ENCODE measurements at regions of chr2 and their contacts with region 1.

Region 1: DNA sequence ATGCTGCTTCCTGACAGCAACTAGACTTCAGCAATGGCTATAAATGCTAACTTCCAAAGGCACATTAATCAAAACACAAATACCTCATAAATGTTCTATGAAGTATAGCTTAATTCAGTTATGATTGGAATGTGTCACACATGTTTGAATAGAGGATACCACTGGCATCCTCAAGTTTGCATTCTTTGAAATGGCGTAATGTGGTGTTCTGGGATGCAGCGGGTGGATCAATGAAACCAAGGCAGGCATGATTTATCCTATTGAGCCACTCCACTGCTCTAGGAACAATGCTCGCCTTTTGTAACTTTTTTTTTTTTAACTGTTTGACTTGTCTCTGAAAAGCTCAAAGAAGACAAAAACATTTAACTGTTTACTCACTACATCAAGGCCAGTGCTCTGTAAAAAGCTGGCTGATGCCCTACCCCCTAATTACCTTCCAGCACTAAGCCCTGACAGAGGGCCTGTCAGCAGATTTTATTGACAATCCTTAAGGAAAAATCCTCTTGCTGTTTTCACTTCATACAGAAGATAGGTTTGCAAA is 278.8 kb upstream of the SESTD1 start:
- DNase-seq: peak; percentile 51 to 77
- H3K4me3 ChIP-seq: no peak overlapping the region
- H3K4me3 Mint-ChIP-seq: no peak overlapping the region
- H3K27ac Mint-ChIP-seq: no peak overlapping the region
- H3K4me1 ChIP-seq: no peaks in the 10 kb centered on the region
- H3K4me1 Mint-ChIP-seq: no peaks in the 10 kb centered on the region
- H3K27me3 ChIP-seq: no peaks in the 10 kb centered on the region
- H3K27me3 Mint-ChIP-seq: no peaks in the 10 kb centered on the region
- CTCF ChIP-seq: no peak

Region 2: GRCh38 chr2:179460181-179460929 is 83.1 kb before region 1 on chr2:
- CTCF ChIA-PET with region 1: no interaction called
- POLR2A ChIA-PET with region 1: no interaction called
- intact Hi-C with region 1: loop called (anchors 5 kb)
- DNase-seq: peak; percentile 46 to 57
- H3K4me3 ChIP-seq: no peak overlapping the region
- H3K4me3 Mint-ChIP-seq: no peak overlapping the region
- H3K27ac Mint-ChIP-seq: peak overlapping the region; percentile 87
- H3K4me1 ChIP-seq: peaks cover 27% of the 10 kb centered on the region
- H3K4me1 Mint-ChIP-seq: peaks cover 11% of the 10 kb centered on the region
- H3K27me3 ChIP-seq: no peaks in the 10 kb centered on the region
- H3K27me3 Mint-ChIP-seq: no peaks in the 10 kb centered on the region
- CTCF ChIP-seq: no peak

Region 3: GRCh38 chr2:179574061-179574546 is 30.7 kb after region 1 on chr2:
- CTCF ChIA-PET with region 1: no interaction called
- POLR2A ChIA-PET with region 1: no interaction called
- intact Hi-C with region 1: loop called (anchors 2 kb)
- DNase-seq: no peak
- H3K4me3 ChIP-seq: no peak overlapping the region
- H3K4me3 Mint-ChIP-seq: peak overlapping the region; percentile 27
- H3K27ac Mint-ChIP-seq: peak overlapping the region; percentile 51
- H3K4me1 ChIP-seq: peaks cover 27% of the 10 kb centered on the region
- H3K4me1 Mint-ChIP-seq: peaks cover 15% of the 10 kb centered on the region
- H3K27me3 ChIP-seq: no peaks in the 10 kb centered on the region
- H3K27me3 Mint-ChIP-seq: no peaks in the 10 kb centered on the region
- CTCF ChIP-seq: no peak

Region 4: GRCh38 chr2:179622112-179622511 is 78.7 kb after region 1 on chr2:
- CTCF ChIA-PET with region 1: no interaction called
- POLR2A ChIA-PET with region 1: no interaction called
- intact Hi-C with region 1: no loop called
- DNase-seq: no peak
- H3K4me3 ChIP-seq: no peak overlapping the region
- H3K4me3 Mint-ChIP-seq: no peak overlapping the region
- H3K27ac Mint-ChIP-seq: no peak overlapping the region
- H3K4me1 ChIP-seq: no peaks in the 10 kb centered on the region
- H3K4me1 Mint-ChIP-seq: no peaks in the 10 kb centered on the region
- H3K27me3 ChIP-seq: no peaks in the 10 kb centered on the region
- H3K27me3 Mint-ChIP-seq: no peaks in the 10 kb centered on the region
- CTCF ChIP-seq: no peak

Region 5: GRCh38 chr2:180359522-180360282 is 816.3 kb after region 1 on chr2:
- CTCF ChIA-PET with region 1: no interaction called
- POLR2A ChIA-PET with region 1: no interaction called
- intact Hi-C with region 1: no loop called
- DNase-seq: no peak
- H3K4me3 ChIP-seq: no peak overlapping the region
- H3K4me3 Mint-ChIP-seq: no peak overlapping the region
- H3K27ac Mint-ChIP-seq: no peak overlapping the region
- H3K4me1 ChIP-seq: peaks cover 4% of the 10 kb centered on the region; the same call in 1 of the 2 replicates
- H3K4me1 Mint-ChIP-seq: peaks cover 10% of the 10 kb centered on the region
- H3K27me3 ChIP-seq: no peaks in the 10 kb centered on the region
- H3K27me3 Mint-ChIP-seq: no peaks in the 10 kb centered on the region
- CTCF ChIP-seq: no peak

Measured in Caco-2 (cell line).